IMR-90 (cell line): ENCODE measurements at regions of chr6 and their contacts with region 1.

Region 1: GRCh38 chr6:148935705-148936435 is 189.0 kb downstream of the UST start:
- DNase-seq: peak; percentile 71
- ATAC-seq: peak; percentile 67
- H3K4me3 ChIP-seq: no peak overlapping the region
- H3K27ac ChIP-seq: no peak overlapping the region
- H3K4me1 ChIP-seq: peaks cover 5% of the 10 kb centered on the region
- H3K27me3 ChIP-seq: no peaks in the 10 kb centered on the region
- CTCF ChIP-seq: no peak
- POLR2A ChIP-seq: no peak
- RAD21 ChIP-seq: no peak

Region 2: DNA sequence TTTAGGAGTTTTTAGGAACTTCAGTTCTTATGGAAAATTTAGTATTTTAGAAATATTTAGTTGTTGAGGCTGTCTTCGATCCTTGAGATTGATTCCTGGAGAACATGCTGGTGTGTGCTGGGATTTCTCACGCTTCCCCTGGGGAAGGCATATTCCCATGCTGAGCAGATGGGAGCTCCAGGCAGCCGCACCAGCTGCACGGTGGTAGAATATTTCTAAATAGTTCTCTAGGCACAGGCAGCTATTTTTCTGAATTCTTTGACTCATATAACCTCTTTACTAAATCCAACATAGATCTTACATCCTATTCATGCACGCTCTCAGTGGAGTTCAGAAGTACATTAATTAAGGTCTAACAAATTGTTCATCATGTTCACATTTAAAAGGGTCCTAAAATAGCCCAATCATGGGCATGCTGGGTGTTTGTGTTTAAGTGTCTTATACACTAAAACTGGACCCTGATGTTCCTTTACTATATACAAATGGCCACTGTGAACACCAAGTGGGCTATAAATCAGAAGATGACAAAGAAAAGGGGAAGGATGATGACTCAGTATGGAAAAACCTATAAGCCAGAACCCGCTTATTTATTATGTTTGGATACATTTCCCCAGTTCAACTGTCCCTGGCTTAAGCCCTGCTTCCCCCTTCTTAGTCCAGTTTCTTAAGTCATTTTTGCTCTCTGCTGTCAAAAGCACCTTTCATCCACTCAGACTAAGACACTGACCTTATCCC is 50.6 kb before region 1 on chr6:
- CTCF ChIA-PET with region 1: no interaction called
- POLR2A ChIA-PET with region 1: no interaction called
- dilution Hi-C with region 1: no loop called
- in situ Hi-C with region 1: no loop called
- intact Hi-C with region 1: loop called (anchors 5 kb)
- DNase-seq: peak; percentile 91
- ATAC-seq: peak; percentile 81
- H3K4me3 ChIP-seq: no peak overlapping the region
- H3K27ac ChIP-seq: no peak overlapping the region
- H3K4me1 ChIP-seq: peaks cover 11% of the 10 kb centered on the region
- H3K27me3 ChIP-seq: no peaks in the 10 kb centered on the region
- CTCF ChIP-seq: no peak
- POLR2A ChIP-seq: no peak
- RAD21 ChIP-seq: no peak

Region 3: DNA sequence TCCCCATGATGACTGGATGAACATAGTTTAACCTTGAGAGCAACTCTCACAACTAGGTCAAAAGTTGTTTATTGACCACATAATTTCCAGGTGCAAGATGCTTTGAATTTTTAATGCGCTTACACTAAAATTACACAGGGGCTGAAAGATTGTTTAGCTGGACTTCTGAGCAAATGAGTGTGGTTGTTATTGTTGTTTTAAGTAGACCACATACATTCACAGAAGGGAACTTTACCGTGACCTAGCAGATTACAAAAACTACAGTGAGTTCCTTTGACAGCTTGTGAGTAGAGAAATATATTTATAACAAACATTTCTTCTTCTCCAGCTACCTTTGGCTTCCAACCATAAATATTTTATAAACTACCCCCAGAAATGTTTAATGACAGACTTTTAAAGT is 10.2 kb before region 1 on chr6:
- CTCF ChIA-PET with region 1: no interaction called
- POLR2A ChIA-PET with region 1: no interaction called
- dilution Hi-C with region 1: no loop called
- in situ Hi-C with region 1: no loop called
- intact Hi-C with region 1: no loop called
- DNase-seq: peak; percentile 24
- ATAC-seq: no peak
- H3K4me3 ChIP-seq: no peak overlapping the region
- H3K27ac ChIP-seq: no peak overlapping the region
- H3K4me1 ChIP-seq: no peaks in the 10 kb centered on the region
- H3K27me3 ChIP-seq: no peaks in the 10 kb centered on the region
- CTCF ChIP-seq: no peak
- POLR2A ChIP-seq: no peak
- RAD21 ChIP-seq: no peak